MCF 10A (cell line): ENCODE measurements at regions of chr2 and their contacts with region 1.

Region 1: GRCh38 chr2:233566141-233566960 is at the start of gene USP40:
- DNase-seq: peak; percentile 94
- H3K4me3 Mint-ChIP-seq: peak within 1 kb of the TSS; percentile 99
- H3K27ac Mint-ChIP-seq: peak within 1 kb of the TSS; percentile 100
- H3K4me1 Mint-ChIP-seq: peaks cover 10% of the 10 kb centered on the region
- H3K27me3 Mint-ChIP-seq: no peaks in the 10 kb centered on the region
- CTCF ChIP-seq: no peak
- total RNA-seq, gene USP40: 56.3 and 67.3 TPM in 2 replicates

Region 2: DNA sequence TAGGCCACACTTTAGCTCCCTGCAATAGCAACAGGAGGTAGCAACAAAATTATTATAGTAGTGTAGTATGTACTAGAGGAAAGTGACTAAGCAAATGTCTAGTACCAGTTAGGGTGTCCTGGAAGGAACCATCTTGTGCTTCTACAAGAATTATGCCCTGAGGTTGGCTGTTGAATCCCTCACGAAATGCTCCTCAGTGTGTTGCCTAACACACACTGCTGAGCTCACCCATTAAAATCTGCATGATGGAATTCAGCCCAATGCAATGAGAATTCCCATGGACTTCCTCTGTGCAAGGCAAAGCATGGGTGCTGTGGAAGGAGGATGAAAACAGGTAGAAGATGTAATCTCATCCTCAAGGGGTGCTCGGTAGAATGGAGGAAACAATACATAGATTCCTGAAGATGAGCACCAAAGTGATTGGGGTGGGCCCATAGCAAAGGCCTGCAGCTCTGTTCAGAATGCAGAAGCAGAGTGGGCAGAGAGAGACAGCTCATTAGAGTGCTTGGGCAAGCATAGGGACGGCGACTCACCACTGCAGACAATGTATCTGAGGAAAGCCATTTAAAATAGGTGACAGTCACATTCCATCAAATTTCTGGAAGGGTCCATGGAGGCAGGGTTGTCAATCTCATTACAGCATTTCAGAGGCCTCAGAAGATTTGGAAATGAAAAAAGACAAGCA is 114.2 kb after region 1 on chr2:
- CTCF ChIA-PET with region 1: interaction called, 4 read pairs
- POLR2A ChIA-PET with region 1: interaction called, 11 read pairs
- intact Hi-C with region 1: no loop called
- DNase-seq: peak; percentile 9
- H3K4me3 Mint-ChIP-seq: no peak overlapping the region
- H3K27ac Mint-ChIP-seq: no peak overlapping the region
- H3K4me1 Mint-ChIP-seq: no peaks in the 10 kb centered on the region
- H3K27me3 Mint-ChIP-seq: no peaks in the 10 kb centered on the region
- CTCF ChIP-seq: no peak

Region 3: DNA sequence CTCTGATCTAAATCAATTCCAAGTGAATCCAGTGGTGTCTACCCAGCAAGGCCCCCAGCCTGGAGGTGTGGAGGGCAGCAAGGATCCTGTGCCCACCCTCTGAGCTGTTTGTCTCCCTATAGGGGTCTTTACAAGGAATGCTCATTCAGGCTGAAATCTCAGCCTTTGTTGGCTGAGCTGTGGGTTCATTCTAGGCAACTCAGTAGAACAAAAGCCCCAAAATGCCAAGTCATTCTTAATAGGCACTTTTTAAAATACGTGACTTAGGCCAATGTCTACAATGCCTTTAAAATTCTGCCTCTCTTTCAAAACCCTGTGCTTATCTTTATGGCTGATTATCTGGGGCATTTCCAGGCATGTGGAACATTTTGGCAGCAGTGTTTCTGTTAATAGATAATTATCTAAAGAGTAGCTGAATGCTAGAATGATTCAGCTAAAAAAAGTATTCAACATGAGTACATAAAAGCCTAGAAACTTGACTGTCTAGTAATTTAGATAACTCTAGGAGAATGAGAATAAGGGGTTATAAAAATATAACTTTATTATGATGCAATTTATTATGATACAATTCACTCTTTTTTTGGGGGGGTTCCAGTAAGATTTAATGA is 133.8 kb after region 1 on chr2:
- CTCF ChIA-PET with region 1: no interaction called
- POLR2A ChIA-PET with region 1: interaction called, 33 read pairs
- intact Hi-C with region 1: no loop called
- DNase-seq: no peak
- H3K4me3 Mint-ChIP-seq: no peak overlapping the region
- H3K27ac Mint-ChIP-seq: peak overlapping the region; percentile 63
- H3K4me1 Mint-ChIP-seq: no peaks in the 10 kb centered on the region
- H3K27me3 Mint-ChIP-seq: no peaks in the 10 kb centered on the region
- CTCF ChIP-seq: no peak

Region 4: DNA sequence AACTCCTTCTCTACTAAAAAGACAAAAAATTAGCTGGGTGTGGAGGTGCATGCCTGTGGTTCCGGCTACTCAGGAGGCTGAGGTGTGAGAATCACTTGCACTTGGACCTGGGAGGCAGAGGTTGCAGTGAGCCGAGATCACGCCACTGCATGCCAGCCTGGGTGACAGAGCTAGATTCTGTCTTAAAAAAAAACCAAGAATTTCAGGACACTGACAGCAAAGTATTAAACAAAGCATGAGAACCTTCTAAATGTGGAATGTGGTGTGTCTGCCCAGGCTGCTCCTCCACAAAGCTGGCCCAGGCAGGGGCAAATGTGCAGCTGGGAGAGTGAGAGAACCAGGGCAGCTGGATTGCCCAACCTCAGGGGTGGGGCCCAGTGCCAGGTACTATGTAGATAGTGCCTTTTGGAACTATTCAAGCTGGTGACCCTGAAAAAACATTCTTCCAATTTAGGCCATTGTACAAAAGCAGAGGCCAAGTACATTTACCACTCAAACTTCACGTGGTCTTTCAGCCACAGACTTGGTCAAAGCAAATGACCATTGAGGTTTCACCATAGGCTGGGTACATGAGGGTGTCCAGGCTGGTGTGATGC is 139.7 kb after region 1 on chr2:
- CTCF ChIA-PET with region 1: interaction called, 8 read pairs
- POLR2A ChIA-PET with region 1: interaction called, 33 read pairs
- intact Hi-C with region 1: loop called (anchors 2 kb)
- DNase-seq: peak; percentile 48
- H3K4me3 Mint-ChIP-seq: no peak overlapping the region
- H3K27ac Mint-ChIP-seq: no peak overlapping the region
- H3K4me1 Mint-ChIP-seq: peaks cover 19% of the 10 kb centered on the region
- H3K27me3 Mint-ChIP-seq: no peaks in the 10 kb centered on the region
- CTCF ChIP-seq: no peak

Region 5: GRCh38 chr2:233711312-233712008 is 145.1 kb after region 1 on chr2:
- CTCF ChIA-PET with region 1: interaction called, 8 read pairs
- POLR2A ChIA-PET with region 1: interaction called, 33 read pairs
- intact Hi-C with region 1: loop called (anchors 2 kb)
- DNase-seq: peak; percentile 86
- H3K4me3 Mint-ChIP-seq: no peak overlapping the region
- H3K27ac Mint-ChIP-seq: no peak overlapping the region
- H3K4me1 Mint-ChIP-seq: peaks cover 31% of the 10 kb centered on the region
- H3K27me3 Mint-ChIP-seq: no peaks in the 10 kb centered on the region
- CTCF ChIP-seq: peak; percentile 89

Region 6: GRCh38 chr2:234135720-234136221 is 569.4 kb after region 1 on chr2:
- CTCF ChIA-PET with region 1: no interaction called
- POLR2A ChIA-PET with region 1: no interaction called
- intact Hi-C with region 1: no loop called
- DNase-seq: peak; percentile 84
- H3K4me3 Mint-ChIP-seq: no peak overlapping the region
- H3K27ac Mint-ChIP-seq: no peak overlapping the region
- H3K4me1 Mint-ChIP-seq: peaks cover 36% of the 10 kb centered on the region
- H3K27me3 Mint-ChIP-seq: no peaks in the 10 kb centered on the region
- CTCF ChIP-seq: peak; percentile 92